Activated CD4-positive, alpha-beta T cell treated with anti-CD3 and anti-CD28 coated beads, Interleukin-2, amount 10 ng/mL, durations not matched to agents 24 days and 14 days (primary cell): ENCODE measurements at regions of chr6 and their contacts with region 1.

Region 1: DNA sequence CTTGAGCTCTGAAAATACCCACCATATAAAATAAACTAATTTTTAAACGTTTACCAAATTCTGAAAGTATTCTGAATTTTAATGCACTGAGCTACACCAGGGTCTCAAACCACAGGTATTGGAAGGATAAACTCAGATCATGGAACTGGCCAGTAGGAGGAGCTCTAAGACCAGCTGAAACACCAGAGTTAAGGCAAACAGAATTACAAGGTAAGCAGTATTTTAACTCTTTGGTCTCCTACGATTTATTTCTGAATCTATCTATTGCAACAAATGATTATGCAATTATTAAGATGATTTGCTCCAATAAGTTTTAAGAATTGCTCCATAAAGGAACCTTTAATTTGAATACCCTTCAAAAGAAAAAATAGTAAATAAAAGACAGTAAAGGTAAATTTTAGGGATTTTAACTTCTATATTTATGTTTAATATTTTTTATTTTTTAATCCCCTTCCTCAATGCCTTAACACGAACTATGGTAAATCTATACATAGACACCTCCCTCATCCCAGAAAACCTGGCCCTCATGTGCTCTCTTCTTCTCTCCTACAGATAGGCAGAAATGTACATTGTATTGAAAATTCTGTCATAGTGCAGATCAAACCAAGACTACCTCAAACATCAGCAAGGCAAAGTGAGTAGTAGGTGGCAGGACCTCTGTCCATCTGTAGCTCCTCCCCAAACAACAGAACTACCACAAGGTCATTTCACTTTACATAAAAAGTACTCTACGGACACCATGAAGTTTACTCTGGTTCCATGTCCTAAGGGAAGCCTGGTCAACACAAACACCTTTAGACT is 58.4 kb downstream of the SMLR1 start:
- DNase-seq: peak; percentile 92
- H3K4me3 Mint-ChIP-seq: no peak overlapping the region
- H3K27ac Mint-ChIP-seq: no peak overlapping the region
- H3K4me1 Mint-ChIP-seq: no peaks in the 10 kb centered on the region
- H3K27me3 Mint-ChIP-seq: no peaks in the 10 kb centered on the region

Region 2: GRCh38 chr6:131116749-131117360 is 231.3 kb after region 1 on chr6:
- intact Hi-C with region 1: loop called (anchors 1 kb)
- DNase-seq: peak; percentile 62
- H3K4me3 Mint-ChIP-seq: no peak overlapping the region
- H3K27ac Mint-ChIP-seq: no peak overlapping the region
- H3K4me1 Mint-ChIP-seq: no peaks in the 10 kb centered on the region
- H3K27me3 Mint-ChIP-seq: peaks cover 7% of the 10 kb centered on the region

Region 3: GRCh38 chr6:131199568-131200272 is 314.1 kb after region 1 on chr6:
- intact Hi-C with region 1: loop called (anchors 10 kb)
- DNase-seq: peak; percentile 93
- H3K4me3 Mint-ChIP-seq: peak overlapping the region; percentile 81
- H3K27ac Mint-ChIP-seq: peak overlapping the region; percentile 95
- H3K4me1 Mint-ChIP-seq: peaks cover 45% of the 10 kb centered on the region
- H3K27me3 Mint-ChIP-seq: no peaks in the 10 kb centered on the region

Region 4: DNA sequence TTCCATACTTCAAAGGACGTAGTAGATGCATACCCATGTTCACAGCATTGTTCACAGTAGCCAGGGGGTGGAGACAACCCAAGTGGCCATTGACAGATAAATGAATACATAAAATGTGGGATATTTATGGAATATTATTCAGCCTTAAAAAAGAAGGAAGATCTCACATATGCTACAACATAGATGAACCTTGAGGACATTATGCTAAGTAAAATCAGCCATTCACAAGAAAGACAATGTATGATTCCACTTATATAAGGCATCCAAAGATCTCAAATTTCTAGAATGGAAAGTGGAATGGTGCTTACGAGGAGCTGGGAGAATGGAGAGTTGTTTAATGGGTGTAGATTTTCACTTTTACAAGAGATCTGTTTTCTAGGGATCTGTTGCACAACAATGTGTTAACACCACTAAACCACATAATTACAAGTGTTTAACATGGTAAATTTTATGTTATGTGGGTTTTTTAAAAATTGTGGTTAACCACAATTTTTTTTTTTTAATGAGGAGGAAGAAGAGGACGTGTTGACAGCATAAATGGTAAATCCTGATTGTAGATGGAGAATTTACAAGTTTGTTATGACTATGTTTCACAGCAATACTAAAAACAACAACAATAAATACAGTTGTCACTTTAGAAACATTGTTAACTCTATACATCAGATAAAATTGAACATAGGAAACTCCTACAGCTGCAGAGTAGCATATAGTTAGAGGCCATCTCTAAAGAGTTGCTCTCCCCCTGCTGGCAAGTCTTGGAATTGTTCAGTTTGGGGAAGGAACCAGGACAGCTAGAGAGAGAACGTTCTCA is 1024.0 kb after region 1 on chr6:
- intact Hi-C with region 1: loop called (anchors 10 kb)
- DNase-seq: peak; percentile 92
- H3K4me3 Mint-ChIP-seq: no peak overlapping the region
- H3K27ac Mint-ChIP-seq: no peak overlapping the region
- H3K4me1 Mint-ChIP-seq: peaks cover 6% of the 10 kb centered on the region
- H3K27me3 Mint-ChIP-seq: peaks cover 33% of the 10 kb centered on the region